Right ventricle myocardium superior (tissue), 1 donor: ENCODE measurements at regions of chr4 and their contacts with region 1.

Region 1: DNA sequence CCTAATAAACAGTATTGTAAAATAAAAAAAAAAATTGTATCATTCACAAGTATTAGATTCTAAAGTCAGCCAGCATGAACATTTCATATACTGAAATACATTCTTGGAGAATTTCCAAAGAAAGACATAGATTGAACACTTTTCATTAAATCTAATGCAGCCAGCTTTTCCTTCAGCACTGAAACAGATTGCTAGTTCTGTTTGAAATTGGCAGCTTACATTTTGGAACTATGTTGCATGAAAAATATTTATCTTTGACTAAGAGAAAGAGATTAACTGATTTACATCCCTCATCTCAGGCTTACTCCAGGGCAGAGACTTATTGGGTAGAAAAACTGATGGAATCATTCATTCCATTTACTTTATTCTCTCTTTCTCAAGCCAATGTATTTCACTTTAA is 272.7 kb downstream of the PDHA2 start:
- DNase-seq: no peak
- ATAC-seq: no peak

Region 2: GRCh38 chr4:96139251-96139929 is 26.8 kb after region 1 on chr4:
- intact Hi-C with region 1: loop called (anchors 2 kb)
- DNase-seq: no peak
- ATAC-seq: no peak